Activated CD8-positive, alpha-beta T cell treated with anti-CD3 and anti-CD28 coated beads, Interleukin-2, amount 10 ng/mL, durations not matched to agents 7 days and 5 days (primary cell): ENCODE measurements at regions of chrX and their contacts with region 1.

Region 1: GRCh38 chrX:65674204-65674893 is 6.9 kb downstream of the MSN start:
- DNase-seq: peak; percentile 51
- ATAC-seq: peak; percentile 57
- H3K4me3 Mint-ChIP-seq: peak overlapping the region; percentile 84
- H3K27ac Mint-ChIP-seq: peak overlapping the region; percentile 81
- H3K4me1 Mint-ChIP-seq: peaks cover 73% of the 10 kb centered on the region
- H3K27me3 Mint-ChIP-seq: no peaks in the 10 kb centered on the region

Region 2: GRCh38 chrX:65581661-65582339 is 92.5 kb before region 1 on chrX:
- CTCF ChIA-PET with region 1: interaction called, 10 read pairs
- POLR2A ChIA-PET with region 1: no interaction called
- DNase-seq: peak; percentile 65
- ATAC-seq: peak; percentile 67
- H3K4me3 Mint-ChIP-seq: no peak overlapping the region
- H3K27ac Mint-ChIP-seq: no peak overlapping the region
- H3K4me1 Mint-ChIP-seq: peaks cover 13% of the 10 kb centered on the region
- H3K27me3 Mint-ChIP-seq: no peaks in the 10 kb centered on the region

Region 3: GRCh38 chrX:65601530-65602220 is 72.7 kb before region 1 on chrX:
- CTCF ChIA-PET with region 1: interaction called, 9 read pairs
- POLR2A ChIA-PET with region 1: interaction called, 10 read pairs
- DNase-seq: peak; percentile 64
- ATAC-seq: peak; percentile 71
- H3K4me3 Mint-ChIP-seq: peak overlapping the region; percentile 31
- H3K27ac Mint-ChIP-seq: peak overlapping the region; percentile 92
- H3K4me1 Mint-ChIP-seq: peaks cover 67% of the 10 kb centered on the region
- H3K27me3 Mint-ChIP-seq: no peaks in the 10 kb centered on the region